ENCODE measurements at regions of chr1 and their contacts with region 1.

Region 1: GRCh38 chr1:186272486-186272885 is 102.6 kb downstream of the TPR start:
- DNase-seq: no peak
- ATAC-seq: peak; percentile 89
- H3K4me3 Mint-ChIP-seq: no peak overlapping the region
- H3K27ac Mint-ChIP-seq: peak overlapping the region; percentile 28
- H3K4me1 Mint-ChIP-seq: peaks cover 18% of the 10 kb centered on the region
- H3K27me3 Mint-ChIP-seq: no peaks in the 10 kb centered on the region

Region 2: DNA sequence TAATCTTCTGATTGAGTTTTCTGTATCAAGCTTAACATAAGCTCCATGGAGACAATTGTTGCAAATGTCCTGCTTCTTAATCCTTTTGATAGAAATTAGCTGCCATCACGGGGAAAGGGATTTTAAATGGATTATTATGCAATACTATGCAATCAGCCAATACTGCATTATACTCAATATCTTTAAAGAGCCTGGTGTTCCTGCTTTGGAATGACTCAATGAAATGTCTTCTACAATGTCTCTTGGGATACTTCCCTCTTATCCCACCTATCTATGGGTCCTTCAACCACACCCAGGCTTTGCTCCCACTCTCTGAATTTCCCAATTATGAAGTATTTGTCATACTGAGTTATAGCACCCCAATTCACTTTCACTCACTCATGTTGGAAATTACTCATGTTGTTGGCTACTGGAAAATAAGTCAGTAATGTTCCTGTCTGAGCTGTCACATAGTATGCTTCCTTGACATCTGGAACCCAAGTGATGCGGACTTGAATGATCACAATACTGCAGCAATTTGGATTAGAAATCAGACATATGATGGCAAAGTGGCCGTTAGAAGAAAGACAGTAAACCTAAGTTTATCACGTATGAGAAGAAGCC is 17.6 kb after region 1 on chr1:
- CTCF ChIA-PET with region 1: interaction called, 5 read pairs
- POLR2A ChIA-PET with region 1: no interaction called
- intact Hi-C with region 1: loop called in 1 of 2 experiments (anchors 2 kb)
- DNase-seq: no peak
- ATAC-seq: peak; percentile 75
- H3K4me3 Mint-ChIP-seq: peak overlapping the region; percentile 44
- H3K27ac Mint-ChIP-seq: peak overlapping the region; percentile 99
- H3K4me1 Mint-ChIP-seq: peaks cover 68% of the 10 kb centered on the region
- H3K27me3 Mint-ChIP-seq: no peaks in the 10 kb centered on the region

Measured in activated CD4-positive, alpha-beta T cell treated with anti-CD3 and anti-CD28 coated beads for 36 hours (primary cell).